ENCODE measurements at regions of chr12 and their contacts with region 1.

Region 1: DNA sequence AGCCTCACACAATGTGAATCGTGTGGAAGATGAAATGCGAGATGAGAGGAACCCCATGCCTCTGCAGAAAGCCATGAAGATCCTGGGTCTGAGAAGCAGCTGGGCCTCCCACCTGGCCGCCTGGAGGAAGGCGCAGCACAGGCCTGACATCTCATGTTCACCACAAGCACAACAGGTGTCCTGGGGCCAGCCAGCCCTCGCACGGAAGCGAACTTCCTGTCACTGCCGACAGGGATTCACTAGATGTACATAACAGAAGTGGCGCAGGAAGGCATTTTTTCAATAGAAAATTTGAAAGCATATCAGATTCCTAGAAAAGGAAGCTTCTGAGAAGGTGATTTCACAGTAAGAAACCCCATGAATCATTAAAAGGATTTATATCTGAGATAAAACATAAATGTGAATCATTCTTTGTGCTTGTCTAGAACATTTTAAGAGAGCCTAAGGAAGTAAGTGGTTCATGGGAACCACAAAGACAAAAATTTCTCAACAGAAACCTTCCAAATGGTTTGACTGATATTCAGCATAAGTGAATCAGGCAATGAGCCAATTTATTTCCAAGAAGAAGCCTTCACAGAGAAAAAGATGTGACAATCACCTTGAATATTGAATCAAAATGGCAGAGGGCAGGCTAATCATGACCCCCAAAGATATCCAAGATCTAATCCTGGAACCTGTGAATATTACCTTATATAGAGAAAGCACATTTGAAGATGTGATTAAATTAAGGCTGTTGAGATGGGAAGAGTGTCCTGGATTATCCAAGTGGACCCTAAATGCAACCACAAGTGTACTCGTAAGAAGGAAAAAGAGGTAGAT is 311.9 kb downstream of the DUSP6 start:
- DNase-seq: no peak
- ATAC-seq: no peak

Region 2: GRCh38 chr12:89461649-89462612 is 421.6 kb after region 1 on chr12:
- intact Hi-C with region 1: loop called (anchors 10 kb)
- DNase-seq: no peak
- ATAC-seq: peak; percentile 93

Region 3: GRCh38 chr12:90042920-90043641 is 1002.7 kb after region 1 on chr12:
- intact Hi-C with region 1: no loop called
- DNase-seq: no peak
- ATAC-seq: no peak

Measured in sciatic nerve (tissue), 2 donors.